ENCODE measurements at regions of chr4 and their contacts with region 1.

Region 1: GRCh38 chr4:40056716-40057585 is at the start of gene N4BP2:
- DNase-seq: peak; percentile 71
- H3K4me3 Mint-ChIP-seq: peak within 1 kb of the TSS; percentile 93
- H3K27ac Mint-ChIP-seq: peak within 1 kb of the TSS; percentile 95
- H3K4me1 Mint-ChIP-seq: peaks cover 30% of the 10 kb centered on the region
- H3K27me3 Mint-ChIP-seq: no peaks in the 10 kb centered on the region
- total RNA-seq, gene N4BP2: 17.5 to 18.8 TPM

Region 2: GRCh38 chr4:38663801-38664705 is 1392.9 kb before region 1 on chr4 and contains the start of gene KLF3:
- CTCF ChIA-PET with region 1: no interaction called
- intact Hi-C with region 1: loop called (anchors 10 kb)
- DNase-seq: peak; percentile 86
- H3K4me3 Mint-ChIP-seq: peak within 1 kb of the TSS; percentile 79
- H3K27ac Mint-ChIP-seq: peak within 1 kb of the TSS; percentile 87
- H3K4me1 Mint-ChIP-seq: peaks cover 66% of the 10 kb centered on the region
- H3K27me3 Mint-ChIP-seq: no peaks in the 10 kb centered on the region
- total RNA-seq, gene KLF3: 15.2 to 15.8 TPM

Region 3: DNA sequence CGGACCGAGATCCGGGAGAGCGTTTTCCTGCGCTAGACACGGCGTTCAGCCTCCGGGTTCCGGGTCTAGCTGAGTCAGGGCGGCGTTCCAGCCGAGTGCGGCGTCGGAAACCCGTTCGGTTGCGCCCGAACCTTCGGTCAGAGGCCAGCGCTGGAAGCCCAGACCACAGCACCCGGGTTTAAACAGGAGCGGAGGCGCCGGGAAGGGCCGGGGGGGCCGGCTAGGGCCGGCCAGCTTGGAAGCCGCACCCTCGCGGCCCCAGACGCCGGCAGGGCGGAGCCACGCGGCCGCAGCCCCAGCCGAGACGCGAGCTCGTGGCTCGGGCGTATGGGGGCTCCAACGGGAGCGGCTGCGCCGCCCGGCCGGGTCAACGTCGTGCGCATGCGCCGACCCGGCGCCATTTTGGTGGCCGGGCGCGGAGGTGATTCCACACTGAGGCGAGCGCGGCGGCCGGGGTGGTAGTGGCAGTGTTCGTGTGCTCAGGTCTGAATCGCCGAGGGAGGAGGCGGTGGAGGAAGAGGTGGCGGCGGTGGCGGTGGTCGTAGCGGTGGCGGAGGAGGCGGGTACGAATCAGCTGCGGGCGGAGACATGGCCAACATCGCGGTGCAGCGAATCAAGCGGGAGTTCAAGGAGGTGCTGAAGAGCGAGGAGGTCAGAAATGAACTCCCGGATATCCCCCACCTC is 359.1 kb before region 1 on chr4 and contains the start of gene UBE2K:
- CTCF ChIA-PET with region 1: no interaction called
- intact Hi-C with region 1: loop called (anchors 2 kb)
- DNase-seq: peak; percentile 85
- H3K4me3 Mint-ChIP-seq: peak within 1 kb of the TSS; percentile 98
- H3K27ac Mint-ChIP-seq: peak within 1 kb of the TSS; percentile 98
- H3K4me1 Mint-ChIP-seq: peaks cover 32% of the 10 kb centered on the region
- H3K27me3 Mint-ChIP-seq: no peaks in the 10 kb centered on the region
- total RNA-seq, gene UBE2K: 60.6 to 69.5 TPM

Region 4: GRCh38 chr4:40033613-40034012 is 23.3 kb before region 1 on chr4:
- CTCF ChIA-PET with region 1: no interaction called
- intact Hi-C with region 1: no loop called
- DNase-seq: no peak
- H3K4me3 Mint-ChIP-seq: no peak overlapping the region
- H3K27ac Mint-ChIP-seq: no peak overlapping the region
- H3K4me1 Mint-ChIP-seq: no peaks in the 10 kb centered on the region
- H3K27me3 Mint-ChIP-seq: no peaks in the 10 kb centered on the region

Region 5: DNA sequence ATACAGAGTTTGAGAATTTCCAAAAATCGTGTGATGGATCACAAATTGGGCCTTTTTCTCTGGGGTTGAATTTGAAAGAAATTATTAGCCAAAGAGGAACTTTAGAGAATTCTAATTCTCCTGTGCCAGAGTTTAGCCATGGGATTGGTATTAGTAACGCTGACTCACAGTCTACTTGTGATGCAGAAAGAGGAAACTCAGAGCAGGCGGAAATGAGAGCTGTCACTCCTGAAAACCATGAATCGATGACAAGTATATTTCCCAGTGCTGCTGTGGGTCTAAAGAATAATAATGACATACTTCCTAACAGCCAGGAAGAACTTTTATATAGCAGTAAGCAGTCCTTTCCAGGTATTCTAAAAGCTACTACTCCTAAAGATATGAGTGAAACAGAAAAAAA is 64.6 kb after region 1 on chr4:
- CTCF ChIA-PET with region 1: no interaction called
- intact Hi-C with region 1: loop called (anchors 1 kb)
- DNase-seq: peak; percentile 51
- H3K4me3 Mint-ChIP-seq: no peak overlapping the region
- H3K27ac Mint-ChIP-seq: peak overlapping the region; percentile 61
- H3K4me1 Mint-ChIP-seq: peaks cover 46% of the 10 kb centered on the region
- H3K27me3 Mint-ChIP-seq: no peaks in the 10 kb centered on the region

Region 6: GRCh38 chr4:40325189-40326019 is 268.5 kb after region 1 on chr4:
- CTCF ChIA-PET with region 1: interaction called, 14 read pairs
- intact Hi-C with region 1: loop called (anchors 1 kb)
- DNase-seq: peak; percentile 82
- H3K4me3 Mint-ChIP-seq: no peak overlapping the region
- H3K27ac Mint-ChIP-seq: no peak overlapping the region
- H3K4me1 Mint-ChIP-seq: peaks cover 27% of the 10 kb centered on the region
- H3K27me3 Mint-ChIP-seq: no peaks in the 10 kb centered on the region

Region 7: GRCh38 chr4:40672536-40673526 is 615.9 kb after region 1 on chr4:
- CTCF ChIA-PET with region 1: no interaction called
- intact Hi-C with region 1: loop called (anchors 2 kb)
- DNase-seq: peak; percentile 67
- H3K4me3 Mint-ChIP-seq: peak overlapping the region; percentile 32
- H3K27ac Mint-ChIP-seq: peak overlapping the region; percentile 86
- H3K4me1 Mint-ChIP-seq: peaks cover 37% of the 10 kb centered on the region
- H3K27me3 Mint-ChIP-seq: no peaks in the 10 kb centered on the region

Region 8: DNA sequence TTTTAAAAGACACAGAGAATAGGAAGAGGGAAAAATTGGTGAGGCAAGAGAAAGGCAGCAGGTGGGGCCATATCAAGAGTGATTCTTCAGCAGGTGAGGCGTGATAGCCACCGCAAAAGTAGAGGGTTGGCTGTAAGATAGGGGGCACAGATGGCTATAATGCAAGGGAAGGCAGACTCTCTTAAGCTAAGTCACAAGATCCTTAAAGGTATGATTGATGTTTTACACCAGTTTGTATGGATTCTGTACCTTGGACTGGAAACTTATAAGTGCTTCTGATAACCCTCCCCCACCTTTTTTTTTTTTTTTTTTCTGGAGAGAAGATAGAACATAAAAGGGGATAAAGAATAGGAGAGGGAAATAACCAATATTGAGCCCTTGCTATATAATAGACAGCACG is 732.8 kb after region 1 on chr4:
- CTCF ChIA-PET with region 1: no interaction called
- intact Hi-C with region 1: no loop called
- DNase-seq: no peak
- H3K4me3 Mint-ChIP-seq: no peak overlapping the region
- H3K27ac Mint-ChIP-seq: no peak overlapping the region
- H3K4me1 Mint-ChIP-seq: no peaks in the 10 kb centered on the region
- H3K27me3 Mint-ChIP-seq: no peaks in the 10 kb centered on the region

Measured in activated naive CD4-positive, alpha-beta T cell treated with anti-CD3 and anti-CD28 coated beads for 36 hours (primary cell).